B cell (primary cell): ENCODE measurements at regions of chr19 and their contacts with region 1.

Region 1: DNA sequence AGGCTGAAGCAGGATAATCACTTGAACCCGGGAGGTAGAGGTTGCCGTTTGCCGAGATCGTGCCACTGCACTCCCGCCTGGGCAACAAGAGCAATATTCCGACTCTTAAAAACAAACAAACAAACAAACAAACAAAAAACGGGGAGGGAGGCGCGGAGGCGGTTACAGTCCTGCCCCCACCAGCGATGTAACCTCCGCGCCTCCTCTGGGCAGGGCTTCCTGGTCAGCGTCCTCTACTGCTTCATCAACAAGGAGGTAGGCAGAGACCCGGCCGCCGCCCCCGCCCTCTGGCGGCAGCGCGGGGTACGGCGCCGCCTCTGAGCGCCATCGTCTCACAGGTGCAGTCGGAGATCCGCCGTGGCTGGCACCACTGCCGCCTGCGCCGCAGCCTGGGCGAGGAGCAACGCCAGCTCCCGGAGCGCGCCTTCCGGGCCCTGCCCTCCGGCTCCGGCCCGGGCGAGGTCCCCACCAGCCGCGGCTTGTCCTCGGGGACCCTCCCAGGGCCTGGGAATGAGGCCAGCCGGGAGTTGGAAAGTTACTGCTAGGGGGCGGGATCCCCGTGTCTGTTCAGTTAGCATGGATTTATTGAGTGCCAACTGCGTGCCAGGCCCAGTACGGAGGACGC is 10.2 kb downstream of the SNRPD2 start:
- DNase-seq: peak; percentile 92
- ATAC-seq: peak; percentile 95
- H3K4me3 ChIP-seq: peak overlapping the region in 4 of 5 experiments; percentile 29 to 57 (median 46)
- H3K4me3 Mint-ChIP-seq: peak overlapping the region; percentile 87
- H3K27ac ChIP-seq: no peak overlapping the region
- H3K27ac Mint-ChIP-seq: peak overlapping the region; percentile 50
- H3K4me1 ChIP-seq: peaks cover 24 to 31% of the 10 kb centered on the region in 2 donors
- H3K4me1 Mint-ChIP-seq: peaks cover 23% of the 10 kb centered on the region
- H3K27me3 ChIP-seq: peaks cover 0 to 27% (median 10%) of the 10 kb centered on the region in 4 experiments
- H3K27me3 Mint-ChIP-seq: peaks cover 13% of the 10 kb centered on the region
- CTCF ChIP-seq: peak; percentile 98

Region 2: DNA sequence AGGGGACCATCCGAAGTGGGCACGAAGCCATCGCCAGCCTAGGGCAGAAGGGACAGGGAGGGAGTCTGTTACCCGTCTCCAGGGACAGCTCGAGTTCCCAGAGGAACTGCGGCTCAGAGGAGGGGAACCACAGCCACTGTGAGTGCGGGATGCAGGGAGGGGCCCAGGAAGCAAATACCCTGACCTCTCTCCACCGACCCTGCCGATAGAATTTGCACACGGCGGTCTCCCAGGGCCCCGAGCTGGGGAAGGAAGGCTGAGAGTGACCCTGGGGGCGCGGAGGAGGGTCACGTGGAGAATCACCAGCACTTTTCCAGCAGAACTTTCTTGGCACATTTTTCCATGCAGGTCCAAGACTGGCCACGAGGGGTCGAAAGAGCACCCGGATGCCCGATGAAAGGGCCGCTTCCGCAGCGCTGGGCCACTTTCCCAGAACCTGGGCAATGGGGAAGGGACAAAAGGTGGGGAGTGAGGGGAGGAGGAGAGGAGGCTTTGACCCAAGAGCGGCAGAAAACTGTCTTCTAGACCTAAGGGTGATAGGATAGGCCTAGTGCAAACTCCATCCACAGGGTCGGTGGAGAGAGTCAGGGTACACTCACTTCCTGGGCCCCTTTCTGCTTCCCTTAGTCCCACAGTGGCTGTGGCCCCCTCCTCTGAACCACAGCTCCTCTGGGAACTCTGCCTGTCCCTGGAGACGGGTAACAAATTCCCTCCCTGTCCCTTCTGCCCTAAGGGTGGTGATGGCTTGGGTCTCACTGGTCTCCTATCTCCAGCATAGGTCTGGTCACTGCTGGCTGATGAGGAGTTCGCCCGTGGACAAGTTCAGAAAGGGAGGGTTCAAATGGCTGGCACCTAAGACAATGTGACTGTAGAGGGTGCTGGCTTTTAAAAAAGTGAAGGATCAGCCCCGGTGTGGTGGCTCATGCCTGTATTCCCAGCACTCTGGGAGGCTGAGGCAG is 74.2 kb before region 1 on chr19:
- CTCF ChIA-PET with region 1: no interaction called
- POLR2A ChIA-PET with region 1: no interaction called
- intact Hi-C with region 1: loop called (anchors 1 kb)
- DNase-seq: peak; percentile 62
- ATAC-seq: peak; percentile 62
- H3K4me3 ChIP-seq: no peak overlapping the region
- H3K4me3 Mint-ChIP-seq: peak overlapping the region; percentile 47
- H3K27ac ChIP-seq: no peak overlapping the region
- H3K27ac Mint-ChIP-seq: peak overlapping the region; percentile 26
- H3K4me1 ChIP-seq: peaks cover 11 to 12% of the 10 kb centered on the region in 2 donors
- H3K4me1 Mint-ChIP-seq: peaks cover 10% of the 10 kb centered on the region
- H3K27me3 ChIP-seq: peaks cover 0 to 24% (median 3%) of the 10 kb centered on the region in 4 experiments
- H3K27me3 Mint-ChIP-seq: peaks cover 10% of the 10 kb centered on the region
- CTCF ChIP-seq: peak; percentile 73

Region 3: DNA sequence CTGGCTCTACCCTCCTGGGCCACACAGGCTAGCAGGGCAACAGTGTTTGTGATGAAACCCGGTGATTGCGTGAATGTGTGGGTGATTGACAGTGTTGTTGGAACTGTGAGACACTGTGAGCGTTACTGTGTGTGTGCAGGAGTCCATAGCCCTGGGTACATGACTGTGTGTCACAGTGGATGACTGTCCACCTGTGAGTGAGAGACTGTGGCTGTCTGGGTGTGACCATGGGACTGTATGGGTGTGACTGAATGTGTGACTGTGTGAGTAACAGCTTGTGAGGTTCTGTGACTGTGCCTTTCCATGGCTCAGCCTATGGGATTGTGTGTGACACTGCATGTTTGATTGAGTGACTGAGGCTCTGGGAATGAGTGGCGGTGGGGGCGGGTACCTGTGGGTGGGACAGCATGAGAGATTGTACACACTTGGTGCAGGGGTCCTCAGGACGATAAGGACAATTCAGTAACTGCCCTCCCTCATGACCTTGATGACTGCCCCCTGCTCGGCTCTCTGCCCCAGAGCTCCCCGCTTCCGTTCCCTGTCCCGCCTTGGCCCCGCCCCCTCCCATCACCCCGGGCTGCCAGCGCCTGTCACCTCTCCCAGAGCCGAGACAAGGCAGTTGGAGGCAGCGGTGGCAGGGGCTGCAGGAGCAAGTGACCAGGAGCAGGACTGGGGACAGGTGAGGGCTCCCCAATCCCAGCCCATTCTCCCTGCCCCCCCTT is 13.7 kb before region 1 on chr19 and contains the start of gene GIPR:
- CTCF ChIA-PET with region 1: interaction called, 11 read pairs
- POLR2A ChIA-PET with region 1: interaction called, 3 read pairs
- intact Hi-C with region 1: loop called (anchors 1 kb)
- DNase-seq: peak; percentile 46
- ATAC-seq: no peak
- H3K4me3 ChIP-seq: peak within 1 kb of the TSS; percentile 27 to 50 (median 38)
- H3K4me3 Mint-ChIP-seq: peak within 1 kb of the TSS; percentile 85
- H3K27ac ChIP-seq: no peak within 1 kb of the TSS
- H3K27ac Mint-ChIP-seq: peak within 1 kb of the TSS; percentile 65
- H3K4me1 ChIP-seq: peaks cover 34 to 38% of the 10 kb centered on the region in 2 donors
- H3K4me1 Mint-ChIP-seq: peaks cover 33% of the 10 kb centered on the region
- H3K27me3 ChIP-seq: peaks cover 0 to 61% (median 25%) of the 10 kb centered on the region in 4 experiments
- H3K27me3 Mint-ChIP-seq: peaks cover 36% of the 10 kb centered on the region
- CTCF ChIP-seq: no peak
- total RNA-seq, gene GIPR: 2.3 and 2.9 TPM in 2 replicates